Uterus (tissue), 4 donors: ENCODE measurements at regions of chr9 and their contacts with region 1.

Region 1: DNA sequence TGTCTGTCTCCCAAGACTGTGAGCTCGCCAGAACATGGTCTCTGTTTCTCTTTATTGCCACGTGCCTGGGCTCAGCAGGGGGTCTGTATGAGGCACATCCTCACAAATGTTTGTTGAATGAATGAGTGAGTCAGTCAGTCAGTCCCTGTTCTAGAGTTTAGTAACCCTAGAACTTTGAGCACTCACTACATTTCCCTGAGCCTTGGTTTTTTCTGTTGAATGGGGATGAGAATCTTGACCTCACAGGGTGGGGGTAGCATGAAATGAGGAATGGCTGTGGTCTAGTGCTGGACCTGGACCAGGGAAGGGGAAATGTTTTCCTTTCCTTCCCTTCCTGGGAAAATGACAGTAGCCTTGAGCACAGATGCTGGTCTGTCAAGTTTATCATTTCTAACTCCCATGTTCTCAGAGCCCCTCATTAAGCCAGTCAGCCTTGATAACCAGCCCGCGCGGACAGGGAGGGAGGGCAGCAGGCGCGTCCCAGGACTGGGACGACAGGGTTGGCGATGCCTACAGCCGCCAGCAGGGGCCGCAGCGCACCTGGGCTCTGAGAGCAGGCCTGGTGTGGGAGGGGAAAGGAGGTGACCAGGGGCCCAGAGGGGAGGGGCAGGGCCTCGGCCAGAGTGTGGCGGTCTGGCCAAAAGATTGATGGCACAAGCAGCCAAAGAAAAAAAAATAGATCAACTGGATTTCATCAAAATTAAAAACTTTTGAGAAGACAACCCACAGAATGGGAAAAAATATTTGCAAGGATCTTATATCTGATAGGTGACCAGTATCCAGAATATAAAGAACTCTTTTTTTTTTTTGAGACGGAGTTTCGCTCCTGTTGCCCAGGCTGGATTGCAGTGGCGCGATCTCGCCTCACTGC is 24.1 kb upstream of the WNK2 start:
- DNase-seq: peak; percentile 79 to 84
- H3K4me3 ChIP-seq: no peak overlapping the region
- H3K27ac ChIP-seq: no peak overlapping the region
- H3K4me1 ChIP-seq: no peaks in the 10 kb centered on the region
- H3K27me3 ChIP-seq: no peaks in the 10 kb centered on the region
- CTCF ChIP-seq: peak; percentile 94 to 99 (median 98)
- POLR2A ChIP-seq: no peak

Region 2: DNA sequence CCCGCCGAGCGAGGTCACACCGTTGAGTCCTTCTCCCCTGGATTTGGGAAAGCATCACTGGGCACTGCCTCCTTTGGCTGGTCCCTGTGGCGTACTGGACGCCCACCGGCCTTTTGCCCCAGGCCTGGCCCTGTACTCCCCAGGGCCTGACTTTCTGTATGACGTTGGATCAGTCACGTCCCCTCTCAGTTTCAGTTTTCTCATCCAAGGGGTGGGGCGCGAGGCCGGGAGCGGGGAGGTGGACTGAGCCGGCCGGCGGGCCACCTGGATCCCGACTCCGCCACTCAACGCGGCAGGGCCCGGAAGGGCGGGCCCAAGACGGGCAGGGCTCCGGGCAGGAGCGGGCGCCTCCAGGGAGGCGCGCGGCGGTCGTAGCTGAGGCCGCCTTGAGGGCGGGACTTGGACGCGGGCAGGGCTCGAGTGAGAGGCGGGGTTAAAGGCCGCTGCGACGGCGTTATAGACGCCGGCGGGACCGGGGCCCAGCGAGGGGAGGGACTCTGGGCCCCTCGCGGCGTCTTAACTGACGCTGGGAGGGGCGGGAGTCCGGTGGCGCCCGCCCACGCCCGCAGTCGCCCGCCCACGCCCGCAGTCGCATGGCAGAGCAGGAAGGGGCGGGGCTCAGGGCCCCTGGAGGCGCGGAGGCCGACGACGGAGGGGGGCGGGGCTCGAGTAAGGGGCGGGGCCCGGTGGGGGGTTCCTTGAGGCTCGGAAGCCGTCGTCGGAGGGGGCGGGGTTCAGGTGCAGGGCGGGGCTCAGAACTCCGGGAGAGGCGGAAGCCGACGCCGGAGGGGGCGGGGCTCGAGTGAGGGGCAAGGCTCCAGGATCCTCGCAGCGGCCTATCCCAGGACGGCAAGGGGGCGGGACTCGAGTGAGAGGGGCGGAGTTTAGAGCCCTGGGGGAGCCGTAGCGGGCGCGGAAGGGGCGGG is 64.4 kb before region 1 on chr9:
- intact Hi-C with region 1: no loop called
- DNase-seq: peak; percentile 100
- H3K4me3 ChIP-seq: peak overlapping the region; percentile 51 to 92
- H3K27ac ChIP-seq: peak overlapping the region; percentile 98
- H3K4me1 ChIP-seq: peaks cover 6 to 25% of the 10 kb centered on the region in 2 donors
- H3K27me3 ChIP-seq: no peaks in the 10 kb centered on the region
- CTCF ChIP-seq: peak in 2 of 4 experiments; percentile 12 to 14
- POLR2A ChIP-seq: peak; percentile 74 to 90

Region 3: DNA sequence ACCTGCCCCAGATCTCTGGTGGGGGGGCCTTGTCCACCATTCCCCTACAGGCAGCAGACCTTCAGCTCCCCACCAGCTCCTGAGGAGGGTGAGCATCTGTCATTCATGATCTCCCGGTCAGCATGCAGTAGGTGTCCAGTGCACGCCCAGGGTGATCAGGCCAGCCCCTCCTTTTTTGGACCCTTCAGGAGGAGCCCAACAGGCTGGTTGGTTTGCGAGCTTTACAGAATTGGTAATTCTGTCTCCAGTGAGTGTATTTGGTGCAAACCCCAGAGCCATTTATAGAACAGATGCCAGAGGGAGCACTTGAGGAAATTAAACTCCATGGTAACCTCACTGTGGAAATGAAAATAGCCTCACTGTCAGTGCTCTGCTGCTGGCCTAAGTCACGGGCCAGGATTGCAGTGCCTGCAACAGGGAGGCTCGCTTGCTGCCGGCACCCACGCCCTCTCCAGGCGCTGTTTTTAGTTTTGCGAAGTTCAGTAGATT is 47.5 kb after region 1 on chr9:
- intact Hi-C with region 1: no loop called
- DNase-seq: peak; percentile 47 to 68
- H3K4me3 ChIP-seq: no peak overlapping the region
- H3K27ac ChIP-seq: peak overlapping the region; percentile 36 to 70
- H3K4me1 ChIP-seq: peaks cover 0 to 28% of the 10 kb centered on the region in 2 donors
- H3K27me3 ChIP-seq: no peaks in the 10 kb centered on the region
- CTCF ChIP-seq: peak in 3 of 4 experiments; percentile 5 to 31 (median 28)
- POLR2A ChIP-seq: no peak

Region 4: GRCh38 chr9:93297659-93298497 is 138.0 kb after region 1 on chr9:
- intact Hi-C with region 1: loop called (anchors 10 kb)
- DNase-seq: no peak
- H3K4me3 ChIP-seq: no peak overlapping the region
- H3K27ac ChIP-seq: no peak overlapping the region
- H3K4me1 ChIP-seq: no peaks in the 10 kb centered on the region
- H3K27me3 ChIP-seq: no peaks in the 10 kb centered on the region
- CTCF ChIP-seq: no peak
- POLR2A ChIP-seq: no peak

Region 5: DNA sequence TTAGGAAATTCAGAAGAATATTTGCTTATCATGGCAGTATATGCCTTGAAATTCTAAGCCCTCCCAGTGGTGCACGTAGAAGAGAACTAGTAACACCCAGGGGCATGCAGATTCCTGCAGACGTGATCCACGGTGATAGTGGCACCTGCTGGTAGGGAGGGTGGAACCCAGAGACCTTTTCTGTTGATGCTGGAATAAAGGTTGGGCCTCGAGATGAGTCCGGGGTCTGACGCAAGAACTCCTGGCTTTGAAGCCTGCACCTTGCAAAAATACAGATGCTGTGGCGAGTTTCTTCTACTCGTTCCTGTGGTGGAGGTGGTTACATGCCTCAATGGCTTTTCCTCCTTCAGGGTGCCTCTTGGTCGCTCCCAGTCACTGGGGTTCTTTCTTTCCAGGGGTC is 377.0 kb after region 1 on chr9:
- intact Hi-C with region 1: no loop called
- DNase-seq: no peak
- H3K4me3 ChIP-seq: no peak overlapping the region
- H3K27ac ChIP-seq: no peak overlapping the region
- H3K4me1 ChIP-seq: no peaks in the 10 kb centered on the region
- H3K27me3 ChIP-seq: no peaks in the 10 kb centered on the region
- CTCF ChIP-seq: no peak
- POLR2A ChIP-seq: no peak